Right cardiac atrium (tissue), 5 donors: ENCODE measurements at regions of chr12 and their contacts with region 1.

Region 1: GRCh38 chr12:45543906-45544315 is 185.6 kb upstream of the ARID2 start:
- DNase-seq: no peak
- ATAC-seq: peak; percentile 84 to 85
- H3K4me3 ChIP-seq: no peak overlapping the region
- H3K27ac ChIP-seq: no peak overlapping the region
- H3K4me1 ChIP-seq: no peaks in the 10 kb centered on the region
- H3K27me3 ChIP-seq: no peaks in the 10 kb centered on the region

Region 2: DNA sequence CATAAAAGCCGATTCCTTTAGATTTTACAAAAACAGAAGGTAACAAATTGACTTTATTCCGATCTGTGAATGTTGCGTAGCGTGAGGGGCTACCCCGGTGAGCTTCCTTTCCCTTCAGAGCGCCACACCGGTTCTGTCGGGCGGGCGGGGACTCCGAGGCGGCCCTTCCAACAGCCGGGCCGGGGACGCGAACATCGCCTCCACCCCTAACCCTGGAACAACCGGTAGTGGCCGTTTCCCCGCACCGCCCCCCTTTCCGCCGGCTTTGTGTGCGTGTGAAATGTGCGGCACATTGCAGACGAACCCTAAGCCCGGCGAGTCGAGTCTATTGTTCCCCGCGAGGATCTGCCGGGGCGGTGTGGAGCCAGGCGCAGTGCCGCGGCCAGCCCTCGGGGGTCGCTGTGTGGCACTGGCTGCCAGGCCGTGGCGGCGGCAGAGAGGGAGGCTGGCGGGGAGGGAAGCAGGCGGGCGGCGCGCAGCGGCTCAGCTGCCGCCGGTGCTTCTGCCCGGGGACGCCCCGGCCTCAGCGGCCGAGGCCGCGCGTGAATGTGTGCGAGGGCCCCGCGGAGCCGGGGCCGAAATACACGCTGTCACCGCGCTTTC is 184.8 kb after region 1 on chr12:
- intact Hi-C with region 1: loop called in 1 of 4 experiments (anchors 10 kb)
- DNase-seq: peak; percentile 97 to 99 (median 98)
- ATAC-seq: peak; percentile 87 to 89
- H3K4me3 ChIP-seq: peak overlapping the region; percentile 94
- H3K27ac ChIP-seq: peak overlapping the region; percentile 98
- H3K4me1 ChIP-seq: no peaks in the 10 kb centered on the region
- H3K27me3 ChIP-seq: no peaks in the 10 kb centered on the region

Region 3: DNA sequence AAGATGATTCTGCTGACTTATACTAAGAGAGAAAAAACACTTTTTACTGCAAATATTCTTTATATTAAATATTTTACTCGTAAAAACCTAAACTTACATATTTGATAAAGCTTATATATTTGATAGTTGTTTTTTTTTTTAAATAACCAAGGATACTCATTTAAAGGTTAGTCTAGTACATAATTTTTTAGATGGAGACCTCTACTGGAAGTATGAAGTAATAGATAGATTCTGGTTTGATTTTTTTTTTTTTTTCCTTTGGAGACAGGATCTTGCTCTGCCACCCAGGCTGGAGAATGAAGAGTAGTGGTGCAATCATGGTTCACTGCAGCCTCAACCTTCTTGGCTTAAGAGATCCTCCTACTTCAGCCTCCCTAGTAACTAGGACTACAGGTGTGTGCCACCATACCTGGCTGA is 202.0 kb after region 1 on chr12:
- intact Hi-C with region 1: loop called in 1 of 4 experiments (anchors 10 kb)
- DNase-seq: no peak
- ATAC-seq: peak in 1 of 2 donors; percentile 56
- H3K4me3 ChIP-seq: no peak overlapping the region
- H3K27ac ChIP-seq: no peak overlapping the region
- H3K4me1 ChIP-seq: peaks cover 2% of the 10 kb centered on the region
- H3K27me3 ChIP-seq: no peaks in the 10 kb centered on the region

Region 4: GRCh38 chr12:46005151-46005797 is 461.4 kb after region 1 on chr12:
- intact Hi-C with region 1: loop called in 1 of 4 experiments (anchors 10 kb)
- DNase-seq: no peak
- ATAC-seq: no peak
- H3K4me3 ChIP-seq: no peak overlapping the region
- H3K27ac ChIP-seq: no peak overlapping the region
- H3K4me1 ChIP-seq: no peaks in the 10 kb centered on the region
- H3K27me3 ChIP-seq: no peaks in the 10 kb centered on the region